CD8-positive, alpha-beta T cell (primary cell): ENCODE measurements at regions of chr13 and their contacts with region 1.

Region 1: DNA sequence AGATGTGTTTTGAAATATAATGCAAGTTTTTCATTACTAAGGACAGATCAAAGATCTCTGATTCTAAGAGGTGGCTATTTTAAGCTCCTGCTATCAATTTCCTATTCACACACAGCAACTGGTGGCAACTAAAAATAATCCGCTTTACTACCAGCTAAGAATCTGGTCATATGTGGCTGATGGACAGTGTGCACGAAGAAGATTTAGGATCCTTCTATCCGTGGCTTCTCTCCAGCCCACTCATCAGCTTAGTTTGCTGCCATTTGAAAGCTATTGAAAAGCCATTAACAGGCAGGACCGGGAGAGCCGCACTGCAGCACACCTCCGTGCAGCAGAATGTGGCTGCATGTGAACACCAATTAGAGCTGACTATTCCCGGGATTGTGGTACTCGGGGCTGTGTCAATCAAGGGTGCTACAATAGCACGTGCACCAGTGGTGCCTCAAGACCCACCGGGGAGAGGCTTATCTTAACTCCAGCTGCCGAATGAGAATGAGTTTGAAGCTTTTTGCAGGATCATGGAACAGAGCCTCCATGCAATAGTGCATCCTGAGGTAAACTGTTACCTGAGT is at the start of gene MYO16:
- DNase-seq: no peak
- ATAC-seq: no peak
- H3K4me3 ChIP-seq: no peak within 1 kb of the TSS
- H3K4me3 Mint-ChIP-seq: no peak within 1 kb of the TSS
- H3K27ac ChIP-seq: no peak within 1 kb of the TSS
- H3K27ac Mint-ChIP-seq: no peak within 1 kb of the TSS
- H3K4me1 ChIP-seq: no peaks in the 10 kb centered on the region
- H3K4me1 Mint-ChIP-seq: no peaks in the 10 kb centered on the region
- H3K27me3 ChIP-seq: no peaks in the 10 kb centered on the region
- H3K27me3 Mint-ChIP-seq: no peaks in the 10 kb centered on the region
- CTCF ChIP-seq: no peak
- total RNA-seq, gene MYO16: 0.08 TPM in 1 of 2 experiments, not detected in the other

Region 2: GRCh38 chr13:108676620-108677019 is 47.4 kb after region 1 on chr13:
- CTCF ChIA-PET with region 1: no interaction called
- POLR2A ChIA-PET with region 1: no interaction called
- intact Hi-C with region 1: loop called in 1 of 2 experiments (anchors 5 kb)
- DNase-seq: no peak
- ATAC-seq: no peak
- H3K4me3 ChIP-seq: no peak overlapping the region
- H3K4me3 Mint-ChIP-seq: no peak overlapping the region
- H3K27ac ChIP-seq: no peak overlapping the region
- H3K27ac Mint-ChIP-seq: no peak overlapping the region
- H3K4me1 ChIP-seq: no peaks in the 10 kb centered on the region
- H3K4me1 Mint-ChIP-seq: no peaks in the 10 kb centered on the region
- H3K27me3 ChIP-seq: no peaks in the 10 kb centered on the region
- H3K27me3 Mint-ChIP-seq: peaks cover 2% of the 10 kb centered on the region
- CTCF ChIP-seq: no peak